ENCODE measurements at regions of chr7 and their contacts with region 1.

Region 1: DNA sequence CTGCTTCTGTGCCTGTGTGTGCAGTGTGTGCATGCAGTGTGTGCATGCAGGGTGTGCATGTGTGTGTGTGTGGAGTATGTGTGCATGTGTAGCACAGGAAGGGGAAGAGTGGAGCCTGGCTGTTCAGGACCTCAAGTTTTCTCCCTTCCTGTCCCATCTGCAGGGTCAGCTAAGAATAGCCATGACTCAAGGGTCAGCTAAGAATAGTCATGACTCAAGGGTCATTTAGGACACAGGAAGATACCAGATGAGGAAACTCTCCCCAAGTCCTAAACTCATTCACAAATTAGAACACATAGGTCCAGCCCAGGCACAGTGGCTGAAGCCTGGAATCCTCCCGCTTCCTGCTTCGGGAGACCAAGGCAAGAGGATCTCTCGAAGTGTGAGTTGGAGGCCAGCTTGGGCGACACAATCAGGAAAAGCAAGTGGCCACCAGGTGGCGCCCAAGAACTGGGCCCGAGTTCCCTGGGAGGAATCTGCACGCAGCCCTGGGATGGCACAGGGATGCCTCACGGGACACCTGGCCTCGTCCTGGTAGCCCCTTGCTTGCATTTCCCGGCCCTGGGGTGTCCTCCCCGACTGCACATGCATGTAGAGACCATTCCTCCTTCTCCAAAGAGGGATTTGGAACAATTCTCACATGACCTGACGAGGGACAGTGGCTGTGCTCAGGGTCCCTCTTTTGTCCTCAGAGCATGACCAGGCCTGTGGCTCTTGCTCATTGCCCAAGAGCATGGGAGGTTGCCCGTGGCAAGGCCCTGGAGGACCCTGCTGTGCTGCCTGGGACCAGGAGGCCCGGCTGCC is 21.4 kb upstream of the VOPP1 start:
- DNase-seq: peak; percentile 57
- H3K4me3 ChIP-seq: no peak overlapping the region
- H3K27ac ChIP-seq: peak overlapping the region; percentile 33
- H3K4me1 ChIP-seq: peaks cover 13% of the 10 kb centered on the region
- H3K27me3 ChIP-seq: peaks cover 4% of the 10 kb centered on the region
- CTCF ChIP-seq: peak; percentile 71

Region 2: GRCh38 chr7:55432939-55433784 is 160.6 kb before region 1 on chr7:
- intact Hi-C with region 1: loop called (anchors 10 kb)
- DNase-seq: no peak
- H3K4me3 ChIP-seq: no peak overlapping the region
- H3K27ac ChIP-seq: no peak overlapping the region
- H3K4me1 ChIP-seq: no peaks in the 10 kb centered on the region
- H3K27me3 ChIP-seq: no peaks in the 10 kb centered on the region
- CTCF ChIP-seq: peak; percentile 66

Region 3: DNA sequence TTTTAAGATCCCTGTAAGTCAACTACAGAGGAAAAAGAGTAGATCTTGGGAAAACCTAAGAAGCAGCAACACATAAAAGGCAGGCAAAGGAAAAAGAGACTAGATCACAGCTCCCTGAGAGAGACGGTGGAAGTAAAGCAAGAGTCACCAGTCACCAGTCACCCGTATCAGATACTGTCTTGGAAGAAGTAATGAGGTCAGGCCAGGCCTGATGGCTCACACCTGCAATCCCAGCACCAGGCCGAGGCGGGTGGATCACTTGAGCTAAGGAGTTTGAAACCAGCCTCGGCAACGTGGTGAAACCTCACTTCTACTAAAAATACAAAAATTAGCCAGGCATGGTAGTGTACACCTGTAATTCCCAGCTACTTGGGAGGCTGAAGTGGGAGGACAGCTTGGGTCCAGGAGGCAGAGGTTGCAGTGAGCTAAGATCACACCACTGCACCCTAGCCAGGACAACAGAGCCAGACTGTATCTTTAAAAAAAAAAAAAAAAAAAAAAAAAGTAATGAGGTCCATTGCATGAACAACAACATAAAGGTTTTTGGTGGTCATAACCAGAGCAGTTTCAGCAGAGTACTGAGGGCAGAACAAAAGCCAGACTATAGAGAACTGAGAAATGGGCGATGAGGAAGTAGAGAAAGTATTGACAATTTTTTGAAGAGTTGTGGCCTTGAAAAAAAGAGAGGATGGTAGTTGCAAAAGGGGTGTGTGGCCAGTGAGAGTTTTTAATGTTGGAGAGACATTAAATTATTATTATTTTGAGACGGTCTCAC is 310.5 kb after region 1 on chr7:
- intact Hi-C with region 1: no loop called
- DNase-seq: no peak
- H3K4me3 ChIP-seq: no peak overlapping the region
- H3K27ac ChIP-seq: no peak overlapping the region
- H3K4me1 ChIP-seq: no peaks in the 10 kb centered on the region
- H3K27me3 ChIP-seq: no peaks in the 10 kb centered on the region
- CTCF ChIP-seq: no peak